Activated CD8-positive, alpha-beta T cell treated with anti-CD3 and anti-CD28 coated beads for 36 hours (primary cell): ENCODE measurements at regions of chr18 and their contacts with region 1.

Region 1: GRCh38 chr18:21612125-21612991 is at the start of gene SNRPD1:
- DNase-seq: peak; percentile 89
- ATAC-seq: peak; percentile 99
- H3K4me3 Mint-ChIP-seq: peak within 1 kb of the TSS; percentile 99
- H3K27ac Mint-ChIP-seq: peak within 1 kb of the TSS; percentile 100
- H3K4me1 Mint-ChIP-seq: peaks cover 29% of the 10 kb centered on the region
- H3K27me3 Mint-ChIP-seq: no peaks in the 10 kb centered on the region
- CTCF ChIP-seq: peak; percentile 88
- total RNA-seq, gene SNRPD1: 148 to 159 TPM

Region 2: GRCh38 chr18:21600526-21601410 is 11.6 kb before region 1 on chr18 and contains the start of gene ESCO1:
- CTCF ChIA-PET with region 1: interaction called, 144 read pairs
- POLR2A ChIA-PET with region 1: interaction called, 89 read pairs
- intact Hi-C with region 1: no loop called
- DNase-seq: peak; percentile 97
- ATAC-seq: peak; percentile 92
- H3K4me3 Mint-ChIP-seq: peak within 1 kb of the TSS; percentile 86
- H3K27ac Mint-ChIP-seq: peak within 1 kb of the TSS; percentile 98
- H3K4me1 Mint-ChIP-seq: peaks cover 39% of the 10 kb centered on the region
- H3K27me3 Mint-ChIP-seq: no peaks in the 10 kb centered on the region
- CTCF ChIP-seq: peak; percentile 97
- total RNA-seq, gene ESCO1: 21.8 to 23.1 TPM

Region 3: GRCh38 chr18:21629089-21629832 is 16.9 kb after region 1 on chr18:
- CTCF ChIA-PET with region 1: interaction called, 3 read pairs
- POLR2A ChIA-PET with region 1: interaction called, 14 read pairs
- intact Hi-C with region 1: no loop called
- DNase-seq: no peak
- ATAC-seq: no peak
- H3K4me3 Mint-ChIP-seq: no peak overlapping the region
- H3K27ac Mint-ChIP-seq: peak overlapping the region; percentile 69
- H3K4me1 Mint-ChIP-seq: peaks cover 19% of the 10 kb centered on the region
- H3K27me3 Mint-ChIP-seq: no peaks in the 10 kb centered on the region
- CTCF ChIP-seq: no peak

Region 4: GRCh38 chr18:21656402-21656801 is 44.0 kb after region 1 on chr18:
- CTCF ChIA-PET with region 1: no interaction called
- POLR2A ChIA-PET with region 1: no interaction called
- intact Hi-C with region 1: no loop called
- DNase-seq: no peak
- ATAC-seq: no peak
- H3K4me3 Mint-ChIP-seq: no peak overlapping the region
- H3K27ac Mint-ChIP-seq: no peak overlapping the region
- H3K4me1 Mint-ChIP-seq: peaks cover 7% of the 10 kb centered on the region
- H3K27me3 Mint-ChIP-seq: no peaks in the 10 kb centered on the region
- CTCF ChIP-seq: no peak

Region 5: GRCh38 chr18:21704603-21705364 is 92.4 kb after region 1 on chr18 and contains the start of gene ABHD3:
- CTCF ChIA-PET with region 1: interaction called, 3 read pairs
- POLR2A ChIA-PET with region 1: interaction called, 11 read pairs
- intact Hi-C with region 1: loop called (anchors 10 kb)
- DNase-seq: peak; percentile 94
- ATAC-seq: peak; percentile 95
- H3K4me3 Mint-ChIP-seq: peak within 1 kb of the TSS; percentile 94
- H3K27ac Mint-ChIP-seq: peak within 1 kb of the TSS; percentile 92
- H3K4me1 Mint-ChIP-seq: peaks cover 31% of the 10 kb centered on the region
- H3K27me3 Mint-ChIP-seq: no peaks in the 10 kb centered on the region
- CTCF ChIP-seq: peak; percentile 22
- total RNA-seq, gene ABHD3: 17.8 to 18.0 TPM

Region 6: GRCh38 chr18:21740724-21741510 is 128.6 kb after region 1 on chr18 and contains the start of gene MIB1:
- CTCF ChIA-PET with region 1: interaction called, 3 read pairs
- POLR2A ChIA-PET with region 1: interaction called, 3 read pairs
- intact Hi-C with region 1: loop called (anchors 5 kb)
- DNase-seq: no peak
- ATAC-seq: peak; percentile 74
- H3K4me3 Mint-ChIP-seq: peak within 1 kb of the TSS; percentile 94
- H3K27ac Mint-ChIP-seq: peak within 1 kb of the TSS; percentile 95
- H3K4me1 Mint-ChIP-seq: peaks cover 34% of the 10 kb centered on the region
- H3K27me3 Mint-ChIP-seq: no peaks in the 10 kb centered on the region
- CTCF ChIP-seq: no peak
- total RNA-seq, gene MIB1: 34.6 to 37.4 TPM

Region 7: DNA sequence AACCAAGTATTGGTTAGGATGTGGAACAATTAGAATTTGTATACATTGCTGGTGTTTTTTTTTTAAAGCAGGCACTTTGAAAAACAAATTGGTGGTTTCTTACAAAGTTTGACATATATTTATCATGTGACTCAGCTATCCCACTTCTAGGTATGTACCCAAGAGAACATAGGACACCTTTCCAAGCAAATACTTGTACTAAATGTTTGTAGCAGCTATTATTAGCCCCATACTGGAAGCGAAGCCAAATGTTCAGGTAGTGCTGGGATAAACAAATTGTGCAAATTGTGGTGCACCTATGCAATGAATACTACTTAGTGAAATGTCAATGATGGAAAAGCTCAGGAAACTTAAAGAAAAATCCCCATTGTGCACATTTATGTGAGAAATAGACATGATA is 229.2 kb after region 1 on chr18:
- CTCF ChIA-PET with region 1: no interaction called
- POLR2A ChIA-PET with region 1: no interaction called
- intact Hi-C with region 1: loop called (anchors 10 kb)
- DNase-seq: no peak
- ATAC-seq: no peak
- H3K4me3 Mint-ChIP-seq: no peak overlapping the region
- H3K27ac Mint-ChIP-seq: no peak overlapping the region
- H3K4me1 Mint-ChIP-seq: no peaks in the 10 kb centered on the region
- H3K27me3 Mint-ChIP-seq: no peaks in the 10 kb centered on the region
- CTCF ChIP-seq: no peak